Motor neuron (in vitro differentiated cells): ENCODE measurements at regions of chrX and their contacts with region 1.

Region 1: DNA sequence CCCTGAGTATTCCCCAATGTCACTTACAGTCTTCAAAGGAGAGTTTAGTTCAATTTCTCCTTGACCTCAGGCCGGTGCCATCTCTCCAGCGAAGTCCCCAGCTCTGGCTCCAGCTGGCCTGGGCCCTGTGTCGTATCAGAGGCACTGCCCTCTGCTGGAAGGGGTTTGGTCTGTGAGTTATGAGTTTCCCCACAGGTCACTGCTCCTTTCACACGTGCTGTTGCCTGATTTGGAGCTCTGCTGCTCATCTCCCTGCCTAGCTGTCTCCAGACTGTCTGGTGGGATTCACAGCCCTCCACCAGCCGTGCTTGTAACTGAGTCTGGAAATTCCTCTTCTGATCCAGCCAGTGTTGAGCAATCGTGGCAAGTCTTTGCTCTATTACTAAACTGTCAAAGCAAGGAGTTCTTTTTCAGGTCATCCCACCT is at the start of gene RAP2C:
- ATAC-seq: peak; percentile 38 to 53 (median 46)
- H3K4me3 ChIP-seq: peak within 1 kb of the TSS; percentile 63 to 87 (median 78)
- H3K27ac ChIP-seq: peak within 1 kb of the TSS; percentile 68 to 96
- H3K4me1 ChIP-seq: peaks cover 0 to 6% of the 10 kb centered on the region in 2 donors
- total RNA-seq, gene RAP2C: 16.6 to 34.8 (median 23.2) TPM

Region 2: GRCh38 chrX:131830400-131831184 is 388.8 kb before region 1 on chrX:
- in situ Hi-C with region 1: loop called in 2 of 9 experiments (anchors 25 kb)
- ATAC-seq: peak; percentile 25 to 95 (median 92)
- H3K4me3 ChIP-seq: peak overlapping the region; percentile 13 to 37 (median 33)
- H3K27ac ChIP-seq: peak overlapping the region in 1 of 2 donors; percentile 47
- H3K4me1 ChIP-seq: peaks cover 0 to 5% of the 10 kb centered on the region in 2 donors

Region 3: GRCh38 chrX:131841496-131842410 is 377.6 kb before region 1 on chrX:
- in situ Hi-C with region 1: loop called in 3 of 9 experiments (anchors 10 to 25 kb)
- ATAC-seq: peak; percentile 55 to 93 (median 65)
- H3K4me3 ChIP-seq: no peak overlapping the region
- H3K27ac ChIP-seq: no peak overlapping the region
- H3K4me1 ChIP-seq: no peaks in the 10 kb centered on the region

Region 4: DNA sequence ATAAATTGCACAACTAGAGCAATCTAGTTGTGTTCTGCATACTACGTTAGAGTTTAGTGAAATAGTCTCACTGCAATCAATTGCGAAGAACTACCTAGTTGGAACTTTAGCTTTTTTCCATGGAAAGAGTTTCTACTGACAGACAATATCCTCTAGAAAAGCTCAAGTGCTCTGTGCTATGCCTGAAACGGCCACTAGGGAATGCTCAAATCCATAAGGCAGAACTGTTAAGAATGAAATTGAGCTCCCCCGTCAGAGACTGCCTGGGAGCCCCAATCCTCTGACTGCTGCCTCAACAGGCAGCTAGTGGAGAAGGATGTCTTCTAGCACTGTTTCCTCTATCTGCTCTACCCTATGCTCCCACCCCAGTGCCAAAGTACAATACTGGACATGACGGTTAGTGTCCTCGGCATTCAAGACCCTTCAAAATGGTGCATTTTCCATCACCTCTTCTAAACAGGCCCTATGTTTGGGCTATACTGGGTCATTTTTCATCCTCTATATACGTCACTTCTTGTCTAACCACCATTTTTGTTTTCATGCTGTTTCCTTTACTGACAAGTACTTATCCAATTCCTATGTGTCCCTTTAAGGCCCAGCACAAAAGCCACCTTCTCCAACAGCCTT is 126.8 kb before region 1 on chrX:
- in situ Hi-C with region 1: loop called in 2 of 9 experiments (anchors 10 to 25 kb)
- ATAC-seq: peak in 6 of 8 experiments; percentile 22 to 81 (median 59)
- H3K4me3 ChIP-seq: no peak overlapping the region
- H3K27ac ChIP-seq: no peak overlapping the region
- H3K4me1 ChIP-seq: no peaks in the 10 kb centered on the region